Activated CD4-positive, alpha-beta memory T cell treated with anti-CD3 and anti-CD28 coated beads, Interleukin-2, amount 10 ng/mL, durations not matched to agents 7 days and 5 days (primary cell): ENCODE measurements at regions of chr6 and their contacts with region 1.

Region 1: DNA sequence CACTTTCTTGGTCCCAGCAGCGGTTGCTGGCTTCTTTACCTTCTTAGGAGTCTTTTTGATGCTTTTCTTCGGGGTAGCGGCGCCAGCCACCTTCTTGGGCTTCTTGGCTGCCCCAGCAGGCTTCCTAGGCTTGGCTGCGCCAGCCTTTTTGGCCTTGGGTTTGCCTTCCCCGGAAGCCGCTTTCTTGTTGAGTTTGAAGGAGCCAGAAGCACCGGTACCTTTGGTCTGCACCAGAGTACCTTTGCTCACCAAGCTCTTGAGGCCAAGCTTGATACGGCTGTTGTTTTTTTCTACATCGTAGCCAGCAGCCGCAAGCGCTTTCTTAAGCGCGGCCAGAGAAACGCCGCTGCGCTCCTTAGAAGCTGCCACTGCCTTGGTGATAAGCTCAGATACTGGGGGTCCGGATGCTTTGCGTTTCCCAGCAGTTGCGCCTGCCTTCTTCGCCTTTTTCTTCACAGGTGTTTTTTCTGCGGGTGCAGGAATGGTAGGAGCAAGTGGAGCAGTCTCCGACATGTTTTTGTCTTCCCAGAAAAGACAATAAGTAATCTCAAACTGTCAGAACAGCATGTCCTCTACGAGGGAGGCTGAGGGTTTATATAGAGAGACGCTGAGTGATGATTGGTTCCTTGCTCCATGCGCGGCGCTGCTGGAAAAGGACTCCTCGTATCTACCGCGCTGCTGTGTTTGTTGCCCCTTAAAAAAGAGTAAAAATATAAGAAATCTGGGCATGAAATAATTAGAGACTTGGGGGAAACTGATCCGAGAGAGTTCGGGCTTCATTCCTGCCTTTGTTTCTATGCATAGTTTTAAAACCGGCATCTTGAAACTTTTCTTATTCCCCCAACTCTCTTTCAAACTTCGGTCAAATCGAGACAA is 130.3 kb upstream of the BTN3A2 start:
- DNase-seq: peak; percentile 85
- H3K4me3 Mint-ChIP-seq: peak overlapping the region; percentile 76
- H3K27ac Mint-ChIP-seq: peak overlapping the region; percentile 95
- H3K4me1 Mint-ChIP-seq: peaks cover 41% of the 10 kb centered on the region
- H3K27me3 Mint-ChIP-seq: no peaks in the 10 kb centered on the region

Region 2: DNA sequence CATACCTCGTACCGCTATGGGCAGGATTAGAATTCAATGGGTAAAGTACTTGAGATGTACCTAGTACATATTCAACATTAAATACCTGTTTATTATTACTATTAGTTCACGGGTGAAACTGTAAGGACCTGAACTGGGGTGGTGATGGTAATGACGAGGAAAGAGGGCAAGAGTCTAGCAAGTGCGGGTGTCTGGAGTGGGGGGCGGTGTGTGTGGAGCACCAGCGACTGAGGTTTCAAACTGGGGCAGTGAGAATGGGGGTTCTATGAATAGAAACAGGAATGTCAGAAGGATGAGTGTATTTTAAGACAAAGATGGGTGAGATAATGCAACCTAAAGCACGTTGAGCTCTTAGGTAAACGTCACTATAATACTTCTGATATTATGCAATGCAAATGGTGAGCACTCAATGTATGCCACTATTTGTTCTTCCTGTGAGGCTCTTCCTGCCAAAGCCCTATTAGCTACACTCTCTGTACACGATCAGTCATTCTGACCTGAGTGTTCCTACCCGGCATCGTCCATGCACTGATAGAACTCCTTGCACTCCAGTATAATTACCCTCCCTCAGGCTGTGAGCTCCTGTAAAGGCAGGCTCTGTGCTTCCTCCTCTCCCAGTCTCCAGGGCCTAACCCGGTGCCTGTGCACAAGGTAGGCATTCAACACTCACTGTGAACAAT is 1684.8 kb before region 1 on chr6:
- CTCF ChIA-PET with region 1: no interaction called
- POLR2A ChIA-PET with region 1: no interaction called
- DNase-seq: no peak
- H3K4me3 Mint-ChIP-seq: no peak overlapping the region
- H3K27ac Mint-ChIP-seq: no peak overlapping the region
- H3K4me1 Mint-ChIP-seq: peaks cover 5% of the 10 kb centered on the region
- H3K27me3 Mint-ChIP-seq: peaks cover 10% of the 10 kb centered on the region

Region 3: GRCh38 chr6:26031595-26032339 is 202.9 kb before region 1 on chr6:
- CTCF ChIA-PET with region 1: no interaction called
- POLR2A ChIA-PET with region 1: interaction called, 79 read pairs
- DNase-seq: peak; percentile 92
- H3K4me3 Mint-ChIP-seq: peak overlapping the region; percentile 84
- H3K27ac Mint-ChIP-seq: peak overlapping the region; percentile 100
- H3K4me1 Mint-ChIP-seq: peaks cover 74% of the 10 kb centered on the region
- H3K27me3 Mint-ChIP-seq: peaks cover 4% of the 10 kb centered on the region

Region 4: GRCh38 chr6:26175428-26176181 is 59.1 kb before region 1 on chr6:
- CTCF ChIA-PET with region 1: interaction called, 5 read pairs
- POLR2A ChIA-PET with region 1: interaction called, 112 read pairs
- DNase-seq: peak; percentile 68
- H3K4me3 Mint-ChIP-seq: peak overlapping the region; percentile 5
- H3K27ac Mint-ChIP-seq: peak overlapping the region; percentile 50
- H3K4me1 Mint-ChIP-seq: peaks cover 44% of the 10 kb centered on the region
- H3K27me3 Mint-ChIP-seq: no peaks in the 10 kb centered on the region

Region 5: GRCh38 chr6:26204332-26205165 is 30.1 kb before region 1 on chr6:
- CTCF ChIA-PET with region 1: interaction called, 7 read pairs
- POLR2A ChIA-PET with region 1: interaction called, 600 read pairs
- DNase-seq: peak; percentile 90
- H3K4me3 Mint-ChIP-seq: no peak overlapping the region
- H3K27ac Mint-ChIP-seq: no peak overlapping the region
- H3K4me1 Mint-ChIP-seq: peaks cover 35% of the 10 kb centered on the region
- H3K27me3 Mint-ChIP-seq: no peaks in the 10 kb centered on the region

Region 6: DNA sequence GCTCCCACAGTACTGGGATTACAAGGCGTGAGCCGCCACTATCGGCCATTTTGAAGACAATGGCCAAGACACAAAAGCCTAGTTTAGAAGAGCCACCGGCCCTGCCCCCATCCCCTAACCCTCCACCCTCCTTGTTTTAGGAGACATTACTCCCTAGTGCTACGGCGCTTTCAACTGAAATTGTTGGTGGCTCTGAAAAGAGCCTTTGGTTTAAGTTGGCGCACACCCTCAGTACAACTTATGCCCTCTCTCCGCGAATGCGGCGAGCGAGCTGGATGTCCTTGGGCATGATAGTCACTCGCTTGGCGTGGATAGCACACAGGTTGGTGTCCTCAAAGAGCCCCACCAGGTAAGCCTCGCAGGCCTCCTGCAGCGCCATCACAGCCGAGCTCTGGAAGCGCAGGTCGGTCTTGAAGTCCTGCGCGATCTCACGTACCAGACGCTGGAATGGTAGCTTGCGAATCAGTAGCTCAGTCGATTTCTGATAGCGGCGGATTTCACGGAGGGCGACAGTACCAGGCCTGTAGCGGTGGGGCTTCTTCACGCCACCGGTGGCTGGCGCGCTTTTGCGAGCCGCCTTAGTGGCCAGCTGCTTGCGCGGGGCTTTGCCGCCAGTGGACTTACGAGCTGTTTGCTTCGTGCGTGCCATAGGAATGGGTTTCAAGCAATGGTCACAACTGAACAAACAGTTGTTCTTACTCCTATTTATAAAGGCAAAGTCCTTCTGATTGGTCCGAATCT is 15.5 kb after region 1 on chr6:
- CTCF ChIA-PET with region 1: interaction called, 48 read pairs
- POLR2A ChIA-PET with region 1: interaction called, 44 read pairs
- DNase-seq: peak; percentile 84
- H3K4me3 Mint-ChIP-seq: peak overlapping the region; percentile 90
- H3K27ac Mint-ChIP-seq: peak overlapping the region; percentile 93
- H3K4me1 Mint-ChIP-seq: peaks cover 42% of the 10 kb centered on the region
- H3K27me3 Mint-ChIP-seq: no peaks in the 10 kb centered on the region

Region 7: DNA sequence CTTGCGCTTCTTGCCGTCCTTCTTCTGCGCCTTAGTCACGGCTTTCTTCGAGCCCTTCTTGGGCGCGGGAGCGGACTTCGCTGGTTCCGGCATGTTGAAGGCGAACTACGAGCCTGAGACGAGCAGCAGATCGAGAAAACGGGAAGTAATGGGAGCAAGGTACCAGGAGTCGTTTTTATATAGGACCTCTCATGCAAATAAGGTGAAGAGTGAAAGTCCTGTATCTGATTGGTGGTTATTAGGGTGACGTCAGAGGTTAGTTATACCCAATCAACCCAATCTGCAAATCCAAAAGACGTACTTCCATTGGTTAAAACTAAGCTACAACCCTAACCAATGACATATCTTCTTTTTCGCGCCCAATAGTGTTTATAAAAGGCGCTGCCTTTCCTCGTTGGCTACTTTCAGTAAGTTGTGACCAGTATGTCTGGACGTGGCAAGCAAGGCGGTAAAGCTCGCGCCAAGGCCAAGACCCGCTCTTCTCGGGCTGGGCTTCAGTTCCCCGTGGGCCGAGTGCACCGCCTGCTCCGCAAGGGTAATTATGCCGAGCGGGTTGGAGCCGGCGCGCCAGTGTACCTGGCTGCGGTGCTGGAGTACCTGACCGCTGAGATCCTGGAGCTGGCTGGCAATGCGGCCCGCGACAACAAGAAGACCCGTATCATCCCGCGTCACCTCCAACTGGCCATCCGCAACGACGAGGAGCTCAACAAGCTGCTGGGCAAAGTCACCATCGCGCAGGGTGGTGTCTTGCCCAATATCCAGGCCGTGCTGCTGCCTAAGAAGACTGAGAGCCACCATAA is 912.2 kb after region 1 on chr6:
- CTCF ChIA-PET with region 1: interaction called, 5 read pairs
- POLR2A ChIA-PET with region 1: interaction called, 16 read pairs
- DNase-seq: peak; percentile 87
- H3K4me3 Mint-ChIP-seq: no peak overlapping the region
- H3K27ac Mint-ChIP-seq: no peak overlapping the region
- H3K4me1 Mint-ChIP-seq: peaks cover 31% of the 10 kb centered on the region
- H3K27me3 Mint-ChIP-seq: no peaks in the 10 kb centered on the region

Region 8: DNA sequence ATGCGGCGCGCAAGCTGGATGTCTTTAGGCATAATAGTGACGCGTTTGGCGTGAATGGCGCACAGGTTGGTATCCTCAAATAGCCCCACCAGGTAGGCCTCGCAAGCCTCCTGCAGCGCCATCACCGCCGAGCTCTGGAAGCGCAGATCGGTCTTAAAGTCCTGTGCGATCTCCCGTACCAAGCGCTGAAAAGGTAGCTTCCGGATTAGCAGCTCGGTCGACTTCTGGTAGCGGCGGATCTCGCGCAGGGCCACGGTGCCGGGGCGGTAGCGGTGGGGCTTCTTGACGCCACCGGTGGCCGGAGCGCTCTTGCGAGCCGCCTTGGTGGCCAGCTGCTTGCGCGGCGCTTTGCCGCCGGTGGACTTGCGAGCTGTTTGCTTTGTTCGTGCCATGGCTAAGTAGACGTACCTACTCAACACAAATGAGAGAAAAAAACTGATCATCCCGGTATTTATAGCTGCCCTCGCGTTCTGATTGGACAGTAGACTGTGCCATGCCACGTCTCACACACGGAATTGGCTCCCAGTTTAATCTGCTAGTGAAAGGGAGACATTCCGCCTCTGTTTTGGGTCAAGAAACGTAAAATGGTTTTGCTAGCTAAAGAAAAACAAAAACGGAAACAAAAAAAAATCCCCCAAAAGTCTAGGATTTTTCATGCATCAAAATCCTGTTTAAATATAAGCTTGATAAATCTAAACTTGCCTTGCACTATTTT is 1637.4 kb after region 1 on chr6:
- CTCF ChIA-PET with region 1: no interaction called
- POLR2A ChIA-PET with region 1: interaction called, 44 read pairs
- DNase-seq: peak; percentile 87
- H3K4me3 Mint-ChIP-seq: peak overlapping the region; percentile 81
- H3K27ac Mint-ChIP-seq: peak overlapping the region; percentile 99
- H3K4me1 Mint-ChIP-seq: peaks cover 60% of the 10 kb centered on the region
- H3K27me3 Mint-ChIP-seq: no peaks in the 10 kb centered on the region